Endothelial cell of umbilical vein (primary cell): ENCODE measurements at regions of chr14 and their contacts with region 1.

Region 1: GRCh38 chr14:77097700-77098528 is at the start of gene CIPC:
- DNase-seq: peak; percentile 99
- H3K4me3 ChIP-seq: peak within 1 kb of the TSS; percentile 30 to 72 (median 66)
- H3K27ac ChIP-seq: peak within 1 kb of the TSS; percentile 57
- H3K4me1 ChIP-seq: peaks cover 27% of the 10 kb centered on the region
- H3K27me3 ChIP-seq: no peaks in the 10 kb centered on the region
- CTCF ChIP-seq: no peak
- POLR2A ChIP-seq: no peak
- total RNA-seq, gene CIPC: 17.4 and 17.7 TPM in 2 replicates

Region 2: DNA sequence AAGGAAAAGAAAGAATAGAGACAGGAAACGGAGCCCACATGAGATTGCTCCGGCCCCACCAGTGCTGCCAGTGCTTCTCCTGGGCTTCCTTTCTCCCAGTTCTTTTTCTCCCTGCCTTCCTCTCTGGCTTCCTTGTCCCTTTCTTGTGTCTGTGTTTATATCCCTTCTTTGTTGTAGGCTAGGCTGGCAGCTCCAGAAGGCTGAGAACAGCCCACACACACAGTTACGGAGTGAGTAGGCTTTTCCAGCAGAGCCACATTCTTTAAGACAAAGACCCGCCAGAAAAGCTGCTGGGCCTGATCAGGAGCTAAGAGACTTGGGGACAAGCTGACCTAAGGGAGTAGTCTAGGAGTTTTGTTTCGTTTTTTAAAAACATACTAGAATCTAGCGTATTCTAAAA is 13.1 kb after region 1 on chr14:
- CTCF ChIA-PET with region 1: interaction called, 10 read pairs
- POLR2A ChIA-PET with region 1: interaction called, 4 read pairs
- dilution Hi-C with region 1: no loop called
- intact Hi-C with region 1: loop called (anchors 1 kb)
- DNase-seq: peak; percentile 68
- H3K4me3 ChIP-seq: no peak overlapping the region
- H3K27ac ChIP-seq: peak overlapping the region; percentile 67
- H3K4me1 ChIP-seq: peaks cover 14% of the 10 kb centered on the region
- H3K27me3 ChIP-seq: no peaks in the 10 kb centered on the region
- CTCF ChIP-seq: no peak
- POLR2A ChIP-seq: no peak

Region 3: DNA sequence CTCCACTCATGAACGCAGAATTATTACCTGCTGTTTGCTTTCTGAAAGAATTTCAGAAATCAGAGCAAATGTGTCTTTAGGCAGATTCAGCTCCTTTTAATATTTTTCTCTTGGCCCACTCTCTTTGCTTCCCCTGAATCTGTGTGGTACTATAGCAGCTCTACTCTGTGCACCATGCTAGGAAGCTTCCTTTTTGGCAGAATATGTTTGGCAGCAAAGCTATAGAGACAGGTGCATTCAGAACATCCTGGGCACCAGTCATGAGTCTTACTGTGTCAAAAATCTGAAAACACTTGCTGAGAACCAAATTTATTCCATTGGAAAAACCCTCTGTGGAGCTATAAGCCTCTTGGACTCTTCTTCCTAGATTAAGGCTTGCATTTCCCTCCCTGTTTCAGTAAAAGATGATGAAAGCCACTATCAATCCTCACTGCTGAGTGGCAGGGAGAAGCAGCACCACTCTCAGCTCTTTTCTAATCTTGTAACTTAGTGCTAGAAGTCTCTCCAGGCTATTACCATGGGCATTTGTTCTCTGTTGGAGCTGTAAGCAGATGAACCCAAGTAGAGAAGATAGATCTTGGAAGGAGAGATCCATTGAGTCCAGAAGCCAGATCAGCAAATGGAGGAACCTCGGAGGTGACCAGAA is 18.4 kb after region 1 on chr14:
- CTCF ChIA-PET with region 1: interaction called, 10 read pairs
- POLR2A ChIA-PET with region 1: no interaction called
- dilution Hi-C with region 1: no loop called
- intact Hi-C with region 1: loop called (anchors 1 kb)
- DNase-seq: no peak
- H3K4me3 ChIP-seq: no peak overlapping the region
- H3K27ac ChIP-seq: no peak overlapping the region
- H3K4me1 ChIP-seq: peaks cover 5% of the 10 kb centered on the region
- H3K27me3 ChIP-seq: no peaks in the 10 kb centered on the region
- CTCF ChIP-seq: no peak
- POLR2A ChIP-seq: no peak